Activated naive CD4-positive, alpha-beta T cell treated with anti-CD3 and anti-CD28 coated beads for 36 hours (primary cell): ENCODE measurements at regions of chr11 and their contacts with region 1.

Region 1: DNA sequence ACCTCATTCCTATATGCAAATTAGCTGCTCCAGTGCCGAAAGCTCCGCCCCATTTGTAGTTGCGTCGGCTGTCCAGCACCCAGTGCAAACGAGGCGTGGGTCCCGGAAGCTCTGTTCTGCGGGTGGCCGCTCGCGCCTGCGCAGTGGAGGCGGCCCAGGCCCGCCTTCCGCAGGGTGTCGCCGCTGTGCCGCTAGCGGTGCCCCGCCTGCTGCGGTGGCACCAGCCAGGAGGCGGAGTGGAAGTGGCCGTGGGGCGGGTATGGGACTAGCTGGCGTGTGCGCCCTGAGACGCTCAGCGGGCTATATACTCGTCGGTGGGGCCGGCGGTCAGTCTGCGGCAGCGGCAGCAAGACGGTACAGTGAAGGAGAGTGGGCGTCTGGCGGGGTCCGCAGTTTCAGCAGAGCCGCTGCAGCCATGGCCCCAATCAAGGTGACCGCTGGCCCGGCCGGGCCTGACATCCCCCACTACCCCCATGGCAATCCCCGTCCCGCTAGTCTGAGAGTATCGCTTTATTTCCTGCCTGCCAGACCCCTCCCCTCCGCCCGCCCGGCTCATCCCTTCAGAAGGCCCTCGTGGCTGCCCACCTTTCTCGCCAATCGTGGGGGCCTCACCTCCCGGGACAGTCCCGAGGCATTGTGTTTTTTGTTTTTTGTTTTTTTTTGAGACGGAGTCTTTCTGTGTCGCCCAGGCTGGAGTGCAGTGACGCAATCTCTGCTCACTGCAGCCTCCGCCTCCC is at the start of gene PRDX5:
- DNase-seq: peak; percentile 94
- H3K4me3 Mint-ChIP-seq: peak within 1 kb of the TSS; percentile 94
- H3K27ac Mint-ChIP-seq: peak within 1 kb of the TSS; percentile 99
- H3K4me1 Mint-ChIP-seq: peaks cover 33% of the 10 kb centered on the region
- H3K27me3 Mint-ChIP-seq: no peaks in the 10 kb centered on the region
- total RNA-seq, gene PRDX5: 122 to 132 TPM

Region 2: DNA sequence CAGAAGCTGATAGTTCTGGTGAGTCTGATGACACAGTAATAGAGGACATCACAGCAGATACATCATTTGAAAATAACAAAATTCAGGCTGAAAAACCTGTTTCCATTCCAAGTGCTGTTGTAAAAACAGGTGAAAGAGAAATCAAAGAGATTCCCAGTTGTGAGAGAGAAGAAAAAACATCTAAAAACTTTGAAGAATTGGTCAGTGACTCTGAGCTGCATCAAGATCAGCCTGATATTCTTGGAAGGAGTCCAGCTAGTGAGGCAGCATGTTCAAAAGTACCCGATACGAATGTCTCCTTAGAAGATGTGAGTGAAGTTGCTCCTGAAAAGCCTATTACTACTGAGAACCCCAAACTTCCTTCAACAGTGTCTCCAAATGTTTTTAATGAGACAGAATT is 598.1 kb before region 1 on chr11:
- CTCF ChIA-PET with region 1: no interaction called
- intact Hi-C with region 1: no loop called
- DNase-seq: no peak
- H3K4me3 Mint-ChIP-seq: no peak overlapping the region
- H3K27ac Mint-ChIP-seq: no peak overlapping the region
- H3K4me1 Mint-ChIP-seq: peaks cover 5% of the 10 kb centered on the region
- H3K27me3 Mint-ChIP-seq: no peaks in the 10 kb centered on the region

Region 3: DNA sequence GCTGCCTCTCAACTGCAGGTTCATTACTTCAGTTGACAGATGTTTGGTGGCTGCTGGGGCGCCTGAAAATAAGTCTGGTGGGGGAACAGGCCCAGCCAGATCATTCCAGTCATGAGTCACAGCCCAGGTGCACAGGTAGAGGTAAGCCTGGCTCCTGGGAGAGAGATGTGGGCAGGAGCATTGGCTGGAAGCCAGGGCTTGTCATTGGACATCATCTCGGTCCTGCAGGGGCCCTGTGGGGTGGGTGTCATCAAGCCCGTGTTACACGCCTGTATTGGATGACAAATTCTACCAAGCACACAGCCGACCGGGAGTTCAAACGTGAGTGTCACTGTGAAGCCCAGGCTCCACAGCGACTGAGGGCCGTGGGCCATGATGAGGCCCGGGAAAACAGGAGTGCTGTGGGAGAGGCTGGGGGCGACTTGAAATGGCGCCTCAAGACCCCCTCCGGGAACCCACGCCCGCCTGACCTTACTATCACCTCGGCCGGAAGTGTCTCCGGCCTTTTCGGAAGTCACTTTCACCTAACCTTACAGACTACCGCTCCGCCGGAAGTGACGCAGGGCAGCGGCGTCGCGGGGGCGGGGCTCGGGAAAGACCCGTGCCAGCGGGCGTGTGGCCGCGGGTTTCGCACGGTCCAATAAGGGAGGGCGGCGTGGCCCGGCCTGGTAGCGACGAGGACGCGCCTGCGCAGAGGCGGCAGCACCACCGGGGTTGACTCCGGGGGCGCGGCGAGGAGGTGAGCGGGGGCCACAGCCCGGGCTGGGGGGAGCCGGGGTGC is 77.5 kb before region 1 on chr11 and contains the start of gene FKBP2:
- CTCF ChIA-PET with region 1: interaction called, 4 read pairs
- intact Hi-C with region 1: loop called (anchors 1 kb)
- DNase-seq: peak; percentile 97
- H3K4me3 Mint-ChIP-seq: peak within 1 kb of the TSS; percentile 92
- H3K27ac Mint-ChIP-seq: peak within 1 kb of the TSS; percentile 98
- H3K4me1 Mint-ChIP-seq: peaks cover 35% of the 10 kb centered on the region
- H3K27me3 Mint-ChIP-seq: no peaks in the 10 kb centered on the region
- total RNA-seq, gene FKBP2: 17.2 to 20.0 TPM

Region 4: GRCh38 chr11:64284048-64284961 is 33.8 kb before region 1 on chr11 and contains the start of gene BAD:
- CTCF ChIA-PET with region 1: no interaction called
- intact Hi-C with region 1: loop called (anchors 1 kb)
- DNase-seq: peak; percentile 95
- H3K4me3 Mint-ChIP-seq: peak within 1 kb of the TSS; percentile 82
- H3K27ac Mint-ChIP-seq: peak within 1 kb of the TSS; percentile 90
- H3K4me1 Mint-ChIP-seq: peaks cover 17% of the 10 kb centered on the region
- H3K27me3 Mint-ChIP-seq: no peaks in the 10 kb centered on the region
- total RNA-seq, gene BAD: 12.8 to 14.3 TPM

Region 5: DNA sequence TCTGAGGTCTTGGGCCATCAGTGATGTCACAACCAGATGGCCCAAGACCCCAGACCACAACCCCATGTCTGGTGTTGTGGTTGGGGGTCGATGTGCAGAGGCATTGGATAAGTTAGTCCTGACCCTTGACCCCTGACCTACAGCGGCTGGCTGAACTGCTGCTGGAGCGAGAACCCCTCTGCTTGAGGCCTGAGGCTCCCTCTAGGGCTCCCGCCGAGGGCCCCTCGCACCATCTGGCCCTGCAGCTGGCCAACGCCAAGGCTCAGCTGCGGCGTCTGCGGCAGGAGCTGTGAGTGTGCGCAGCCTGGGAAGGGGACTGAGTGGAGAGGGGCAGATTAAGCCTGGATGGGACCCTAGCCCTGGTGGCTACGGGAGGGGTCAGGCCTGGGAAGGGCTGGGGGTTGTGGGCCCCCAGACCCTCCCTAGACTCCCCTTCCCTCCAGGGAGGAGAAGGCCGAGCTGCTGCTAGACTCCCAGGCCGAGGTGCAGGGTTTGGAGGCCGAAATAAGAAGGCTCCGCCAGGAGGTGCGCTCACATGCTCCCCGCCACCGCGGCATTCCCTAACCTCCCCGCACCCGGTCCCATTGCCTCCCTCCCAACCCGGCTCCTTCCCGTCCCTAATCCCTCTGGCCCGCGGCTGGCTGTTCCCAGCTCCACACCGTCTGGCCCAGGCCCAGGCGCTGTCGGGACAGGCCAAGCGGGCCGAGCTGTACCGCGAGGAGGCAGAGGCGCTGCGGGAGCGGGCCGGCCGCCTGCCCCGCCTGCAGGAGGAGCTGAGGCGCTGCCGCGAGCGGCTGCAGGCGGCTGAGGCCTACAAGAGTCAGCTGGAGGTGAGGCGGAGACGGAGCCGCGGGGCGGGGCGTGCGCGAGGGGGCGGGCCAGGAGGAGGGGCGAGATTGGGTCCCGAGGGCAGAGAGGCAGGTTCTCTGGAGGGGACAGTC is 24.0 kb after region 1 on chr11:
- CTCF ChIA-PET with region 1: interaction called, 11 read pairs
- intact Hi-C with region 1: loop called (anchors 1 kb)
- DNase-seq: peak; percentile 95
- H3K4me3 Mint-ChIP-seq: peak overlapping the region; percentile 18
- H3K27ac Mint-ChIP-seq: no peak overlapping the region
- H3K4me1 Mint-ChIP-seq: peaks cover 34% of the 10 kb centered on the region
- H3K27me3 Mint-ChIP-seq: no peaks in the 10 kb centered on the region

Region 6: DNA sequence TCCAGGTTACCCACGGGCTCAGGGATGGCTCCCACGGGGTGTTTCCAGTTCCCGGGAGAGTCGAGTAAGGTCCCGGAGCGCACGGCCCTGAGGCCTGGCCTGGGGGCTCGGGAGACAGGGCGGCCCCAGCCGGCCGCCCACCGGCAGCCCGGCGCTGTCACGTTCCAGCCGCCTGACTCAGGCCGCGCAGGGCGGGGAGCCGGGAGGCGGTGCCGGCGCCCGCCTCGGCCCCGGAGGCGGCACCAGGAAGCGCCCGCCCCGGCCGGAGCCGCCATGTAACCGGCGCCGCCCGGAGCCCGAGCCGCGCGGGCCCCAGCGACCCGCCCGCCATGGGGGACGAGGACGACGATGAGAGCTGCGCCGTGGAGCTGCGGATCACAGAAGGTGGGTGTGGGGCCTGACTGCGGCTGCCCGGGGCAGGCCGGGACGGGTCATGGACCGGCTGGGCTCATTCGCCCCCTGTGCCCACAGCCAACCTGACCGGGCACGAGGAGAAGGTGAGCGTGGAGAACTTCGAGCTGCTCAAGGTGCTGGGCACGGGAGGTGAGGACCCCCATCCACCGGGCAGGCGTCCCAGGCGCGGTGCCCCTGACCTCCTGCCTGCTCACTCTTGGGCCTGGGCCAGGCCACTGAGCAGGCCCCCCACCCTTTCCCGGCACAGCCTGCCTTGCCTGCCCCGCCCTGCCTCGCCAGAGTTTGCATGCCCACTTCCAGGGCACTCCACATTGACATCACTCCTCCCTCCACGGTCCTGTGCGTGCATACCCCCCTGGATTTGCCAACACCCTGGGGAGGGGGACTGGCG is 41.0 kb after region 1 on chr11 and contains the start of gene RPS6KA4:
- CTCF ChIA-PET with region 1: interaction called, 12 read pairs
- intact Hi-C with region 1: loop called (anchors 1 kb)
- DNase-seq: peak; percentile 60
- H3K4me3 Mint-ChIP-seq: peak within 1 kb of the TSS; percentile 91
- H3K27ac Mint-ChIP-seq: peak within 1 kb of the TSS; percentile 34
- H3K4me1 Mint-ChIP-seq: peaks cover 41% of the 10 kb centered on the region
- H3K27me3 Mint-ChIP-seq: no peaks in the 10 kb centered on the region
- total RNA-seq, gene RPS6KA4: 19.1 to 21.3 TPM